ENCODE measurements at regions of chr2 and their contacts with region 1.

Region 1: GRCh38 chr2:9234680-9235387 is 28.2 kb downstream of the ASAP2 start:
- DNase-seq: peak; percentile 96
- ATAC-seq: peak; percentile 65
- H3K4me3 ChIP-seq: peak overlapping the region; percentile 40 to 66 (median 49); a peak in 5 of 6 replicates
- H3K27ac ChIP-seq: peak overlapping the region; percentile 84
- H3K4me1 ChIP-seq: peaks cover 88% of the 10 kb centered on the region
- H3K27me3 ChIP-seq: no peaks in the 10 kb centered on the region
- CTCF ChIP-seq: no peak
- EP300 ChIP-seq: peak in 1 of 2 experiments; percentile 82; a peak in 2 of 4 replicates
- POLR2A ChIP-seq: peak in 1 of 2 experiments; percentile 11; a peak in 1 of 4 replicates
- RAD21 ChIP-seq: no peak

Region 2: DNA sequence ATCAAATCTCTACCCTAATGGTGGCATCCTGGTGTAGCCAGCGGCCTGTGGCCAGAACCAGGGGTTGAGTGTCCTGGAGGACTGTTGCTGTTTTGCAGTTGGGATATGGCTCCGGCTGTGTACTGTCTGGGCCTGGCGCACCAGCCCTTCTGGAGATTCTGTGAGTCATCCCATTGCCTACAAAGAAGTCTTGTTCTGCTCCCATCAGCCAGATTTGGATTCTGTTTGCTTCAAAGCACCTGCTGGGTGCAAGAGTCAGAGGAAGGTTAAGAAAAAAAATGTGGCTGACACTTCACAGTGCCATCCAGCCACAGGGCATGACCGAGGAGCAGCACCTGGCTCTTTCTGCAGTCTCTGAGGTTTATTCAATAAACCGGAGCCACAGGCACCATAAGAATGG is 69.2 kb before region 1 on chr2:
- CTCF ChIA-PET with region 1: no interaction called
- POLR2A ChIA-PET with region 1: interaction called, 29 read pairs
- in situ Hi-C with region 1: no loop called
- intact Hi-C with region 1: no loop called
- DNase-seq: peak; percentile 68
- ATAC-seq: peak; percentile 18
- H3K4me3 ChIP-seq: no peak overlapping the region
- H3K27ac ChIP-seq: no peak overlapping the region
- H3K4me1 ChIP-seq: peaks cover 54% of the 10 kb centered on the region
- H3K27me3 ChIP-seq: peaks cover 0 to 17% of the 10 kb centered on the region in 2 experiments; a peak in 2 of 5 replicates
- CTCF ChIP-seq: no peak
- EP300 ChIP-seq: no peak; a peak in 1 of 4 replicates
- POLR2A ChIP-seq: no peak
- RAD21 ChIP-seq: no peak

Region 3: DNA sequence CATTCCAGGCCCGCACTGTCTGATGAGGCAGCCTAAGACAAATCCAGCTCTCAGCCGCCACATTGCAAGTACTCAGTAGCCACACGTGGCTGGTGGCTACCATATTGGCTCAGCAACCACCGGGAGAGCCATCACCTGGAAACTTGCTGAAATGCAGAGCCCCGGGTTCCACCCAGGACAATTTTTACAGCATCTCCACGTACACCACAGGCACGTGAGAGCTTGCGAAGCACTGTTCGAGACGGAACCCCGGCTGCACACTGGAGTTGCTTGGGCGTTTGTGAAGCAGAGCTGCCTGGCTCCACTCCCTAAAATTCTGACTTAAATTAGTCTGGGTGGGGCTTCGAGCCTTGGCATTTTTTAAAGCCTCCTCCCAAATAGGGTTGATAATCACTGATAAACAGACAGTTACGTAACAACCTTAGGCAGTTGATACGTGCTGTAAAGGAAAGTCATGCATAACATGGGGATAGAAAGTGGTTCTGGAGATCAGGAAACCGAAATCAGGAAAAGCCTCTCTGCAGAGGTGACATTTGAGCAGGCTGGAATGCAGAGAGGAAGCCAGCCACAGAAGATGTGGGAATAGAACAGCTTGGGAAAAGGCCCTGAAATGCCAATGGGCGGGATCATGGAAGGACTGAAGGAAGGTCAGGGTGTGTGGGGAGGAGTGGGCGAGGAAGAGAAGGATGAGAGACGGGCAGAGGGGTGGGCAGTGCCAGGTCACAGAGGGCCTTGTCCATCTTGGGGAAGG is 22.0 kb before region 1 on chr2:
- CTCF ChIA-PET with region 1: no interaction called
- POLR2A ChIA-PET with region 1: interaction called, 92 read pairs
- in situ Hi-C with region 1: no loop called
- intact Hi-C with region 1: no loop called
- DNase-seq: no peak
- ATAC-seq: no peak
- H3K4me3 ChIP-seq: no peak overlapping the region
- H3K27ac ChIP-seq: no peak overlapping the region
- H3K4me1 ChIP-seq: peaks cover 44% of the 10 kb centered on the region
- H3K27me3 ChIP-seq: no peaks in the 10 kb centered on the region; a peak in 1 of 5 replicates
- CTCF ChIP-seq: no peak
- EP300 ChIP-seq: no peak
- POLR2A ChIP-seq: no peak
- RAD21 ChIP-seq: no peak

Region 4: DNA sequence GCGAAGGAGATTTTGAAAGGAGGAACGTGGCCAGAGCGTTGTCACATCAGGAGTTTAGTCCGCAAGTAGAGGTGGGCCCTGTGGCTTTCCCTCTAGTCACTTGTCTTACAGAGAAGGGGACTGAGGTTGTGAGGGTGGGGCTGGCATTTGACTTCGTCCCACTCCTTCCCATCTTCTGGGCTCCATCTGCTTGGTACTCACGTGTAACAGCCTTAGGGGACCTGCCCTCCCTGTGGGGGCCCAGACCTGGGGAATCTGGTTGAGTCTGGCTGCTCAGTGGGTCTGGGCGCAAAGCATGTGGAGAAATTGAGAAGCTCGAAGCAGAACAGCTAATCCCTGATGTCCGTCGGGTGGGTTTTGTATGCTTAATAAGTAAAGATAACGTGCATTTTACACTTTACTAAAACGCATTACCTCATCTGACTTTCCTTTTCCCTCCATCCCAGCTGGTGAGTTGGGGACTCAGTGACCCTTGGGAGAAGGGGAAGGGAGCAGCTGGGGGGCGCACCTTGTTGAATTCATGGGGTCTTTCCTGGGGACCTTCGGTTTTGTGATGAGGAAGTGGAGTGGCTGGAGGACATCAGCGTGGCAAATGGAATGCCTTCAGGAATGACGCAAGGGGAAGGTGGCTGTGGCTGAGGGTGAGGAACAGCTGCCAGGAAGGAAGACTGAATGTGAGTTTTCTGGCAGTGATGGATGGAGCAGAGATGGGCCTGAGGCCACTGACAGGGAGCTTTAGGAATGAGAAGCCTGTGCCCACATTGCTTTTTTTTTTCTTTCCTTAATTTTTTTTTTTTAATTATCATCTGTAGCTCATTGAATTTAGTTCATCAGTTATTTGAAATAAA is 16.5 kb after region 1 on chr2:
- CTCF ChIA-PET with region 1: no interaction called
- POLR2A ChIA-PET with region 1: interaction called, 28 read pairs
- in situ Hi-C with region 1: no loop called
- intact Hi-C with region 1: no loop called
- DNase-seq: no peak
- ATAC-seq: peak; percentile 22; the same call in 1 of the 3 replicates
- H3K4me3 ChIP-seq: no peak overlapping the region
- H3K27ac ChIP-seq: no peak overlapping the region
- H3K4me1 ChIP-seq: peaks cover 46% of the 10 kb centered on the region
- H3K27me3 ChIP-seq: no peaks in the 10 kb centered on the region
- CTCF ChIP-seq: no peak
- EP300 ChIP-seq: no peak
- POLR2A ChIP-seq: no peak
- RAD21 ChIP-seq: no peak

Region 5: DNA sequence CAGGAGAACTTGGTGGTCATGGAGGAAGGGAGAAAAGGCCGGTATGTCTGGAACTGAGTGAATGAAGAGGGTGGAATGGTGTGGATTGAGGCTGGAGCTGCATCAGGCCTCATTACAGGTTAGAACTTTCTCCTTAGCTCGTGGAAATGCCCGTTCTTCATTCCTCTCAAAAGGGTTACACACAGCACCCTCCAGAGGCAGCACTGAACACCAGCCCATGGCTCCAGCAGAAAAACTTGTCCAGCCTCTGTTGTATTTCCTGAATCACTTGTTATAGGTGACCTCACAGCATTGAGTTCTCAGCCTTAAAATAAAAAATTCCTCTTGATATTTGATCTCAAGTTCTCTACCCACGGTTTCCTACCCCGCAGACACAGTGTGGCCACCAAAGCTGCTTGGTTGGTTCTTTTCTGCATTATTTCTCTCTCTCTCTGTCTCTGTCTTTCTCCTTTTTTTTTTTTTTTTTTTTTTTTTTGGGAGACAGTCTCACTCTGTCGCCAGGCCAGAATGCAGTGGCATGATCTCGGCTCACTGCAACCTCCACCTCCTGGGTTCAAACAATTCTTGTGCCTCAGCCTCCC is 98.8 kb after region 1 on chr2:
- CTCF ChIA-PET with region 1: no interaction called
- POLR2A ChIA-PET with region 1: interaction called, 19 read pairs
- in situ Hi-C with region 1: no loop called
- intact Hi-C with region 1: loop called (anchors 1 kb)
- DNase-seq: peak; percentile 84
- ATAC-seq: peak; percentile 55
- H3K4me3 ChIP-seq: no peak overlapping the region
- H3K27ac ChIP-seq: no peak overlapping the region
- H3K4me1 ChIP-seq: peaks cover 74% of the 10 kb centered on the region
- H3K27me3 ChIP-seq: no peaks in the 10 kb centered on the region
- CTCF ChIP-seq: peak; percentile 90
- EP300 ChIP-seq: no peak; a peak in 1 of 4 replicates
- POLR2A ChIP-seq: no peak
- RAD21 ChIP-seq: peak; percentile 88

Region 6: DNA sequence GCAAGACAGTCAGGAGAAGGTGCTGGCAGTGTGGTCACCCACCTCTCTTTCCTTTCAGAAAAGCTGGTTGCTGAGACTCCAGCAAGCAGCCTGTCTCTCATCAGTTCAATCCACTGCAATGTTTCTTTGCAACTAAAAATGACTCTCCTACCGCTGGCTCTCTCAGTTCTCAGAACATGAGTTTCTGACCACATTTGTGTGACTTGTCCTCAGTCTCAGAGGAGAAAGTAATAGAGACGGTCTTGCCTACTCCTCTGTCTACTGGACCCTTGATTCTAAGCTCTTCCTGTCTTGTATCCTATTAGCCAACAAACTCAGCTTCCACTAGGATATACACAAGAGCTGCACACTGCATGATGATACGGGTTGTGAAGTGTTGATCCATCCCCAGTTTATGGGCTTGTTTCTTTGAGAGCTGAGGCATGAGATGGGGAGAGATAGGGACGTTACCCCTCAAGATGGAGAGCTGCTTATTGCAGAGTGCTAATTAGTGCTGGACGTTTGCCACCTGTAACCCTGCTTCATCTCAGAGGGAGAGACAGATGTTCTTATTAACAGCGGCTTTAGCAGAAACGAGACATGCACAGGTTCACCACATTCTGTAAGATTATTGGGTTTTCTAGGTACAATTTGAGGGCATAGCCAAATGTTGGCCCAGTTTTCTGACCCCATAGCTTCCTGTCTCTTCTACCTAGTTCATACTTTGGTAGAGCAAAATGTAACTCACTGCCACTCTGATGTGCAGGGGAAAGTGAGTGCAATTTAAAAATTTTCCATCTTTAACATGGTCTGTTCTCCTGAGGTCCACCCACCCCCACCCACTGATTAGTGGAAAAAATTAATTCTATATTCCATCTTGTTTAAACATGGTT is 428.4 kb after region 1 on chr2:
- CTCF ChIA-PET with region 1: no interaction called
- POLR2A ChIA-PET with region 1: no interaction called
- in situ Hi-C with region 1: no loop called
- intact Hi-C with region 1: no loop called
- DNase-seq: no peak
- ATAC-seq: no peak
- H3K4me3 ChIP-seq: no peak overlapping the region
- H3K27ac ChIP-seq: no peak overlapping the region
- H3K4me1 ChIP-seq: no peaks in the 10 kb centered on the region
- H3K27me3 ChIP-seq: peaks cover 3 to 30% of the 10 kb centered on the region in 2 experiments; a peak in 2 of 5 replicates
- CTCF ChIP-seq: no peak
- EP300 ChIP-seq: no peak
- POLR2A ChIP-seq: no peak
- RAD21 ChIP-seq: no peak